ENCODE measurements at regions of chr12 and their contacts with region 1.

Region 1: GRCh38 chr12:56286044-56286830 is 13.9 kb downstream of the CS start:
- DNase-seq: no peak
- H3K4me3 Mint-ChIP-seq: no peak overlapping the region
- H3K27ac Mint-ChIP-seq: peak overlapping the region; percentile 8
- H3K4me1 Mint-ChIP-seq: peaks cover 10% of the 10 kb centered on the region
- H3K27me3 Mint-ChIP-seq: no peaks in the 10 kb centered on the region
- CTCF ChIP-seq: no peak

Region 2: DNA sequence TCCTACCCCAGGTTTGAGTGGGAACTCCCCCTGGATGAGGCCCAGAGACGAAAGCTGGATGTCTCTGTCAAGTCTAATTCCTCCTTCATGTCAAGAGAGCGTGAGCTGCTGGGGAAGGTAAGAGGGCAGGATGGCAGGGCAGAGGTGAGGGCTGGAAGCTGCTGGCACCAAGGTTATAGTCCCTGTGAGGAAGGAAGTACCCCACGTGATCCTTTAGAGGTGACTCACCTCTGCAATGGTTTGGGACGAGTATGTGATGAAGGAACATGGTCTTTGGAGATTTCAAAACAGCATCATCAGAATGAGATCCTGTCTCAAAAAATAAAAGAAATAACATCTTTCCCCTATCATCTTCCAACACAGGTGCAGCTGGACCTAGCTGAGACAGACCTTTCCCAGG is 143.0 kb before region 1 on chr12:
- CTCF ChIA-PET with region 1: no interaction called
- intact Hi-C with region 1: no loop called
- DNase-seq: no peak
- H3K4me3 Mint-ChIP-seq: no peak overlapping the region
- H3K27ac Mint-ChIP-seq: no peak overlapping the region
- H3K4me1 Mint-ChIP-seq: no peaks in the 10 kb centered on the region
- H3K27me3 Mint-ChIP-seq: no peaks in the 10 kb centered on the region
- CTCF ChIP-seq: no peak

Region 3: DNA sequence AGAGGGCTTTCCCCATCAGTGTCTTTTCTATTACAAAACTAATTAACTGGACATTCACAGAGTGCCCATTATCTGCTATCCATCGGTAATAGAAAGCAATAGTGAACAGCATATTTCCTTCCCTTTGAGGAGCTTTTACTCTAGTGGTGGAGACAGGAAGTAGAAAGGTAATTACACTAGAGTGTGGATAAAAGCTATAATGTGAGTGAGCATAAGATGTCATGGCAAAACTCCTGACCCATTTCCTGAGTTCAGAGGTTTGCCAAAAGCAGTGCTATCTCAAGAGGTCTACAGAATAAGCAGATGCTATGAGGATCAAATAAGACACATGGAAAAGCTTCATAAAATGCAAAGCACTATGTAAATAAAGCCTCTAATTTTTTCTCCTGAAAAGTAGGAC is 139.0 kb after region 1 on chr12:
- CTCF ChIA-PET with region 1: no interaction called
- intact Hi-C with region 1: no loop called
- DNase-seq: no peak
- H3K4me3 Mint-ChIP-seq: no peak overlapping the region
- H3K27ac Mint-ChIP-seq: no peak overlapping the region
- H3K4me1 Mint-ChIP-seq: no peaks in the 10 kb centered on the region
- H3K27me3 Mint-ChIP-seq: no peaks in the 10 kb centered on the region
- CTCF ChIP-seq: no peak

Region 4: GRCh38 chr12:56537546-56537945 is 251.3 kb after region 1 on chr12:
- CTCF ChIA-PET with region 1: interaction called, 11 read pairs
- intact Hi-C with region 1: no loop called
- DNase-seq: no peak
- H3K4me3 Mint-ChIP-seq: no peak overlapping the region
- H3K27ac Mint-ChIP-seq: peak overlapping the region; percentile 8
- H3K4me1 Mint-ChIP-seq: peaks cover 33% of the 10 kb centered on the region
- H3K27me3 Mint-ChIP-seq: no peaks in the 10 kb centered on the region
- CTCF ChIP-seq: no peak